Transverse colon (tissue), 4 donors: ENCODE measurements at regions of chr10 and their contacts with region 1.

Region 1: DNA sequence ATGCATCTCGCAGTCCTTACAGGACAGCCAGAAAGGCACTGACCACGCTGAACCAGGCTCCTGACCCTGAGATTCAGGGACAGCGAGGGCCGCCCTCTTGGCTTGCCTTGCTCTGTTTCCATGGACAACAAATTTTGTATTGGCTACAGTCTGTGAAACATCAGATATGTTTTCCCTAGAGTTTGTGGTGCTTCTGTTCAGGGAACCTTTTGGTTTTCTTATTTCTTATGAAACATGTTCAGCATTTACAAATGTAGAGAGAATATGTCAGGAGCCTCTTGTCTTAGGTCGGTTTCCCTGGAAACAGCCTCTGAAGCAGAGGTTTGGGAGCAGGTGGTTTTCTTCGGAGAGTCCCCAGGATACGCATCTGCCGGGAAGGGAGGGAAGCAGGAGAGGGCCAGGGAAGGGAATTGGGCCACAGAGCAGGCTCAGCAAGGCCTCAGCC is 260.1 kb downstream of the CCDC3 start:
- DNase-seq: no peak
- H3K4me3 ChIP-seq: no peak overlapping the region
- H3K27ac ChIP-seq: peak overlapping the region; percentile 8 to 46 (median 40)
- H3K4me1 ChIP-seq: peaks cover 0 to 10% (median 5%) of the 10 kb centered on the region in 4 donors
- H3K27me3 ChIP-seq: no peaks in the 10 kb centered on the region
- CTCF ChIP-seq: no peak
- EP300 ChIP-seq: no peak
- POLR2A ChIP-seq: no peak

Region 2: DNA sequence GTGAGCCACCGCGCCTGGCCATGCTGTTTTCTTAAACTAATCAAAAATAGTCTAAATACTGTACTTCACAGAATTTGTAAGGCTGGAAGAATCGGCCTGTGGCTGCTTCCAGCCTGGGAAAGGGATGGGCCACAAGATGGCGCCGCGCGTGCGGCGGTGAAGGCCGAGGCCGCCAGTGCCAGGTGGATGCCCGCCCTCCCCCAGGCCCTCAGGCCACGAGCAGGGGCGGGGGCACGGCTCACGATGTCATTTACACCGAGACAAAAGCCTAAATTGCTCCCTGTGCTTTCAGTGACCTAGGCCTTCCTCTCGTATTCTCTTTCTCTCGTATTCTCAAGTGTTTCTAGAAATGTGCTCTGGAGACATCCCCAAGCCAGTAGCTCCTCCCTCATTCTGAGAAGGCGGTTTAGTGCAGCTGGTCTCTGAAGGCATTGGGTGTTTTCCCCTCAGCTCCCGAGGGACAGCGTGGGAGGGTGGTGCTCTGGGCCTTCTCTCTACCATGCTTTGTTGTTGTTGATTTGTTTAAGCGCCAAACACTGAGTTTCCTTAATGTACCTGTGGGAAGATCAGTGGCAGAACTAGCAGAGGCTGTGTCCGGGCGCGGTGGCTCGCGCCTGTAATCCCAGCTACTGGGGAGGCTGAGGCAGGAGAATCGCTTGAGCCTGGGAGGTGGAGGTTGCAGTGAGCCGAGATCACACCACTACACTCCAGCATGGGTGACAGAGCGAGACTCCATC is 477.0 kb before region 1 on chr10:
- in situ Hi-C with region 1: no loop called
- intact Hi-C with region 1: no loop called
- DNase-seq: peak; percentile 85
- H3K4me3 ChIP-seq: peak overlapping the region in 3 of 4 donors; percentile 19 to 56 (median 30)
- H3K27ac ChIP-seq: peak overlapping the region; percentile 69 to 79 (median 71)
- H3K4me1 ChIP-seq: peaks cover 3 to 26% (median 13%) of the 10 kb centered on the region in 4 donors
- H3K27me3 ChIP-seq: no peaks in the 10 kb centered on the region
- CTCF ChIP-seq: peak; percentile 77 to 82 (median 80)
- EP300 ChIP-seq: no peak
- POLR2A ChIP-seq: no peak

Region 3: GRCh38 chr10:12841826-12842225 is 100.4 kb after region 1 on chr10:
- in situ Hi-C with region 1: no loop called
- intact Hi-C with region 1: loop called (anchors 2 kb)
- DNase-seq: no peak
- H3K4me3 ChIP-seq: no peak overlapping the region
- H3K27ac ChIP-seq: no peak overlapping the region
- H3K4me1 ChIP-seq: peaks cover 6 to 19% (median 9%) of the 10 kb centered on the region in 4 donors
- H3K27me3 ChIP-seq: no peaks in the 10 kb centered on the region
- CTCF ChIP-seq: no peak
- EP300 ChIP-seq: no peak
- POLR2A ChIP-seq: no peak